ENCODE measurements at regions of chr17 and their contacts with region 1.

Region 1: DNA sequence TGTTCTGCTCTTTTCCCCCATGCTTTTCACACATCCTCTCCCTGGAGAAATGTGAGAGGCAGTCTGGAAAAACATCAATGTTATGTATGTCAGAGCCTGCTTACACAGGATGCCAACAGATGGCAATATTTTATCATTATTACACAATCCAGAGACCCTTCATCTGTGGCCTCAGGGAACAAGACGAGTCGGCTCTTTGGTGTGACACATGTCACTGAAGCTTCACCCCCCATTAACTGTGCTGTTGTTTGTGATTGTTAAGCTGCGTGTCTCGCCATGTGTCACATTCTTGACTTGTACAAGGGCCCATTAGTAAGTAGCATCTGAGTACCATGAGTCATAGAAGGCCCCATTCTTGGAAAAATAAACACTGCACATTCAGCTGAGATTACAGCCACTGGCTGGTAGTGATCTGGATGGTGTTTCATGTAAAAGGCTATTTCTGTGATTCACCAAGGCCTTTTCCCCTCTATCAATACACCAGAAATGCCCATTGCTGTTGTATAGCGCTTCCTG is 682.1 kb upstream of the SOX9 start:
- DNase-seq: no peak
- H3K4me3 ChIP-seq: no peak overlapping the region
- H3K27ac ChIP-seq: no peak overlapping the region
- H3K4me1 ChIP-seq: no peaks in the 10 kb centered on the region
- H3K27me3 ChIP-seq: no peaks in the 10 kb centered on the region
- CTCF ChIP-seq: no peak
- POLR2A ChIP-seq: no peak

Region 2: DNA sequence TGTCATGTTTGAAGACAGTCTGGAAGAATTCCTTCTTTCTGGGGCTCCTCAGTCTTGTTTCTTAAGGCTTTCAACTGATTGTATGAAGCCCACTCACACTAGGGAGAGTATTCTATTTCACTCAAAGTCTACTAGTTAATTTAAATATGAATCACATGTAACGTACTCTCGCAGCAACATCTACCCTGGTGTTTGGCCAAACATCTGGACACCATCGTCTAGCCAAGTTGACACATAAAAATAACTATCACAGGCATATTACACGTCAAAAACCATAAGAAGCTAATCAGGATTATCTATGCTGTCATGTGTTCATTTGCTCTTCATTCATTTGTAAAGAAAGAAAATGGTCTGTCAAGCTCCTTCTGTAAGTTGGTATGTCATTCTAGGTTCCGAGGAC is 482.0 kb before region 1 on chr17:
- intact Hi-C with region 1: no loop called
- DNase-seq: no peak
- H3K4me3 ChIP-seq: no peak overlapping the region
- H3K27ac ChIP-seq: no peak overlapping the region
- H3K4me1 ChIP-seq: no peaks in the 10 kb centered on the region
- H3K27me3 ChIP-seq: no peaks in the 10 kb centered on the region
- CTCF ChIP-seq: no peak
- POLR2A ChIP-seq: no peak

Region 3: GRCh38 chr17:71453876-71454422 is 15.3 kb after region 1 on chr17:
- intact Hi-C with region 1: loop called (anchors 1 kb)
- DNase-seq: no peak
- H3K4me3 ChIP-seq: no peak overlapping the region
- H3K27ac ChIP-seq: no peak overlapping the region
- H3K4me1 ChIP-seq: no peaks in the 10 kb centered on the region
- H3K27me3 ChIP-seq: no peaks in the 10 kb centered on the region
- CTCF ChIP-seq: no peak
- POLR2A ChIP-seq: no peak

Region 4: DNA sequence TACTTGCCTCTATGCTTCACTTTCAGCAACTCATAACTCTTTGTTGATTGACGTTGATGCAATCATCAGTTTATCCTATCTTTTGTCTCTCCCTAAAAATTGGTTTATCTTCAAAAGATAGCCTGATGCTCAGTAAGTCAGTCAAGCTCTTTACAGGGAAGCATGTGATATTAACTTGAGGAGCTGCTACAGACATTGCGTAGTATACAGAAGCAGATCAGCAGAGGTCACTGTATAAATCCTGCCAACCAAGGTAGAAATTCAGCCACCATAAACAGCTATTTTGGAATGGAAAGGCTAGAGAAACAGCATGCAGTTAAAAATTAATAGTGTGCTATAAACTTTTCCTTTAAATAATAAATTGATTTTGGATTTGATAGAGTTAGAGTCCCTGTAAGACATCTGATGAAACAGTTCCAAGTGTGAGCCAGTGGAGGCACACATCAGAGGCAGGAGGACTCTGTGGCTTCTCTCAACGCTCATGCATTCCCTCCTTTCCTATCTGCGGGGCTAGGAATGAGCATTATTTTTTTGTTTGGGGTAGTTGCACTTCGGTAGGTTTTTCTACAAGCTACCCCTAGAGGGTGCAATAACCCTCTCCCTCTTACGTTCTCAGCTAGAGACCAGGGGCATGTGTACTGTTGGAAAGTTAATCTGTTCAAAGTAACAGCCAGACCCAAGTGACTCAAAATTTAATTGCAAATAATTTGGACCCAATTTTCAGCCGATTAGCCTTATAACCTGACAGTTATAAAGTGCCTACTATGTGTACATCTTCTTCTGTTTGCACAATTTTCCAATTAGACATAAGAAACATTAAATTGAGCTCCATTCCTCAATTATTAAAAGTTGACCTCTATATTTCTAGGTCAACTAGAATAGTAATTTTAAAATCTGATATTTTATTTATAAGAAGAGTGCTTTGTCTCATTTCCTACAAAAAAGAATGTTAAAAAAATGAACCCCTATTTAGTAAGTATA is 34.4 kb after region 1 on chr17:
- intact Hi-C with region 1: no loop called
- DNase-seq: no peak
- H3K4me3 ChIP-seq: no peak overlapping the region
- H3K27ac ChIP-seq: no peak overlapping the region
- H3K4me1 ChIP-seq: no peaks in the 10 kb centered on the region
- H3K27me3 ChIP-seq: no peaks in the 10 kb centered on the region
- CTCF ChIP-seq: peak in 2 of 3 donors; percentile 42 to 69
- POLR2A ChIP-seq: no peak

Region 5: DNA sequence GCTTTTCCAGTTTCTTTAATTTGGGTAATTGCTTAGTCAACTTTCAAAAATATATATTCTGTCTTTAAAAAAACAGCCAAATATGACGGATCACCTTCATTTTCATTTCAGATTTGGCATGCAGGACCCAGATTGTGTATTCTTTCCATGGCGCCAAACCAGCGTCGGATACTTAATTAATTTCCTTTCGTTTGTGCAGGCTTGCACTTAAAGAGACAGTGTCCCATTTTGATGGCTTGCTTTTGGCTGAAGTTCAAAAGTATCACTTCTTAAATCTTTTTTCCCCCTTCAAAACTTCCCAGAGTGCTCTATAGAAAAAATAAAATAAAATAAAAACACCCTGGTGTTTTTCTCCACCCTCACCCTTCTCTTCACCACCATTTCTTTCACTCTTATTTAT is 287.7 kb after region 1 on chr17:
- intact Hi-C with region 1: no loop called
- DNase-seq: no peak
- H3K4me3 ChIP-seq: peak overlapping the region in 1 of 3 donors; percentile 20
- H3K27ac ChIP-seq: no peak overlapping the region
- H3K4me1 ChIP-seq: no peaks in the 10 kb centered on the region
- H3K27me3 ChIP-seq: no peaks in the 10 kb centered on the region
- CTCF ChIP-seq: no peak
- POLR2A ChIP-seq: no peak

Measured in breast epithelium (tissue), 4 donors.